OCI-LY7 (cell line): ENCODE measurements at regions of chr4 and their contacts with region 1.

Region 1: GRCh38 chr4:166165829-166166420 is 292.9 kb downstream of the TLL1 start:
- DNase-seq: peak; percentile 68
- H3K4me3 ChIP-seq: no peak overlapping the region
- H3K27ac ChIP-seq: no peak overlapping the region
- H3K4me1 ChIP-seq: no peaks in the 10 kb centered on the region
- CTCF ChIP-seq: peak; percentile 84

Region 2: GRCh38 chr4:166252487-166253402 is 86.8 kb after region 1 on chr4:
- CTCF ChIA-PET with region 1: no interaction called
- POLR2A ChIA-PET with region 1: no interaction called
- intact Hi-C with region 1: loop called (anchors 1 kb)
- DNase-seq: peak; percentile 28
- H3K4me3 ChIP-seq: no peak overlapping the region
- H3K27ac ChIP-seq: no peak overlapping the region
- H3K4me1 ChIP-seq: no peaks in the 10 kb centered on the region
- CTCF ChIP-seq: peak; percentile 77

Region 3: GRCh38 chr4:166763018-166763417 is 597.1 kb after region 1 on chr4:
- CTCF ChIA-PET with region 1: no interaction called
- POLR2A ChIA-PET with region 1: no interaction called
- intact Hi-C with region 1: no loop called
- DNase-seq: no peak
- H3K4me3 ChIP-seq: no peak overlapping the region
- H3K27ac ChIP-seq: no peak overlapping the region
- H3K4me1 ChIP-seq: no peaks in the 10 kb centered on the region
- CTCF ChIP-seq: no peak

Region 4: GRCh38 chr4:167622481-167623246 is 1456.7 kb after region 1 on chr4:
- CTCF ChIA-PET with region 1: no interaction called
- POLR2A ChIA-PET with region 1: no interaction called
- intact Hi-C with region 1: loop called (anchors 5 kb)
- DNase-seq: peak; percentile 47
- H3K4me3 ChIP-seq: no peak overlapping the region
- H3K27ac ChIP-seq: no peak overlapping the region
- H3K4me1 ChIP-seq: no peaks in the 10 kb centered on the region
- CTCF ChIP-seq: peak; percentile 87

Region 5: DNA sequence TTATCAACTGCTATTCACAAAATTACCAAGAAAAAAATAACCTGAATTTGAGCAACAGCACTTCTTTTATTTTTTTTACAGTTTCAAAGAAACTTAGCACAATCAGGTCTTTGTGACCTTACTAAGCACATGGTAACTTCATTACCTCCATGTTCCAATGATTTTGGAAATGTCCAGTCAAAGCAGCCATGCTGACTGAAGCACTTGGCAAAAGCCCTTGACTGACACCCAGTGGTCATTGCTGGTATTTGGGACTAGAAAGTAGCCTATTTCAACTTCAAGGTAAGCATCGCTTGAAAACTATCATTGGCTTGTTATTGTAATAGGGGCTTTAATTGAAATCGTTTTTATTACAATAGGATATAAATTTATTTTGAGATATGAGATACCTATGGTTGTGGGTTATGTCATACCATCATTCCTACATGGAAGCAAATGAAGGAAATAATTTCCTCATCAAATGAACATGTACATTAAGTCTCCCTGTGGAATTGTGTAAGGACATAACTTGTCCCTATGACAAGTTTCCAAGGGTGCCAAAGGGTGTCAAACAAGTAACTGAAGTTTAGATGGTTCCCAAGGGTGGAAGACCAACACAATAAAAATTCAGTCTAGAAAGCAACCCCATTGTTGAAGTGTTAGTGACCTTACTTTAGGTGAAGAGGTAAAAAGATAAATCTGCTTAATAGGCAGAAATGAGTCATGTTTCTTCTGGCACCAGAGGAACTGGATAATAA is 1911.2 kb after region 1 on chr4:
- CTCF ChIA-PET with region 1: no interaction called
- POLR2A ChIA-PET with region 1: no interaction called
- intact Hi-C with region 1: loop called (anchors 5 kb)
- DNase-seq: peak; percentile 52
- H3K4me3 ChIP-seq: no peak overlapping the region
- H3K27ac ChIP-seq: no peak overlapping the region
- H3K4me1 ChIP-seq: no peaks in the 10 kb centered on the region
- CTCF ChIP-seq: peak; percentile 94